Caco-2 (cell line): ENCODE measurements at regions of chrX and their contacts with region 1.

Region 1: DNA sequence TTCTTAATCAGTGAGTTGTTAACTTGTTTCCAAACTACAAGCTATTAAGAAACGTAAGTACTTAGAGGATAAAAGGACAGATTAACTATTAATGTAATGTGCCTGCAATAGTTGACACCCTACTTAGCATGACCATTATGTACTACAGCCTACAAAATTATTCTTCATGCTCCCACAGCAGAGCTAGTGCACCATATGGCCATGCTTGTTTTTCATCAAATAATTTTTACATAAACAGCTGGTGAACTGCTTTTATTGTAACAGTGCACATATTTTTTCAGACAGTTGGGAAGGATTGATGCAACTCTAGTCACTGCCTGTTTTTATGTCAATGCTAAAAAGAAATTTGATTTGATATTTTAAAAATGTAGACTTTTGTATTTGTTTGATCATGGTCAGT is 10.2 kb upstream of the MAGEB10 start:
- DNase-seq: no peak
- H3K4me3 ChIP-seq: no peak overlapping the region
- H3K4me3 Mint-ChIP-seq: no peak overlapping the region
- H3K27ac Mint-ChIP-seq: no peak overlapping the region
- H3K4me1 ChIP-seq: no peaks in the 10 kb centered on the region
- H3K4me1 Mint-ChIP-seq: no peaks in the 10 kb centered on the region
- H3K27me3 ChIP-seq: no peaks in the 10 kb centered on the region
- H3K27me3 Mint-ChIP-seq: no peaks in the 10 kb centered on the region
- CTCF ChIP-seq: no peak

Region 2: DNA sequence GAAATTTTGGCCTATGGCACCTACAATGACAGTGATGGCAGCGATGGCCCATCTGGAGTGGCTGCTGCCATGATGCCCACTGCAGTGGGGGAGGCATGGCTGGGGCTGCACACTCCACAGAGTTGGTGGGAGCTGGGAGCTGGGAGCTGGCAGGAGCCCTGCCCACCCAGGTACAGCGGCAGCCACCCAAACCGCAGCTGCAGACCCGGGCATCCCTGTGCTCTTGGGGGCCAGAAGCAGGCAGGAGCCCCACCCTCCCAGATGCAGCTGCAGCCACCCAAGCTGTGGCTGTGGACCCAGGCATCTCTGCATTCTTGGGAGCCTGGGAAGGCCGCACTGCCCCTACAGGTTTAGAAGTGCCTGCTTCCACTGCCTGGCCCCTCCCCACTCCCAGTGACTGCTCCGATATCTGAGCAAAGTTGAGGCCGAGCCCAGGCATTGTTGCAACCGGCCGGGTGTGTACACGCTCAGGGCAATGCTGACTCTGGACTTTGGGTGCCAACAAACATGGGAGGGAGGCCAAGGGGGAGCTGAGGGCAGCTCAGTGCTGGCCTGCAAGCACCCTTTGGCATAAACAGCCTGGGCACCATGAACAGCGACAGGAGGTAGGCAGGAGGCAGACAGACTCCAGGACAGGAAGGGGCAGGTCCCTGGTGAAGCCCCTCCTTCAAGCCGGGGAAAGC is 417.3 kb before region 1 on chrX:
- CTCF ChIA-PET with region 1: no interaction called
- POLR2A ChIA-PET with region 1: no interaction called
- intact Hi-C with region 1: loop called (anchors 5 kb)
- DNase-seq: peak in 1 of 2 experiments; percentile 5
- H3K4me3 ChIP-seq: no peak overlapping the region
- H3K4me3 Mint-ChIP-seq: no peak overlapping the region
- H3K27ac Mint-ChIP-seq: no peak overlapping the region
- H3K4me1 ChIP-seq: no peaks in the 10 kb centered on the region
- H3K4me1 Mint-ChIP-seq: no peaks in the 10 kb centered on the region
- H3K27me3 ChIP-seq: no peaks in the 10 kb centered on the region
- H3K27me3 Mint-ChIP-seq: no peaks in the 10 kb centered on the region
- CTCF ChIP-seq: no peak

Region 3: GRCh38 chrX:27660878-27661277 is 136.7 kb before region 1 on chrX:
- CTCF ChIA-PET with region 1: no interaction called
- POLR2A ChIA-PET with region 1: no interaction called
- intact Hi-C with region 1: no loop called
- DNase-seq: no peak
- H3K4me3 ChIP-seq: no peak overlapping the region
- H3K4me3 Mint-ChIP-seq: no peak overlapping the region
- H3K27ac Mint-ChIP-seq: no peak overlapping the region
- H3K4me1 ChIP-seq: no peaks in the 10 kb centered on the region
- H3K4me1 Mint-ChIP-seq: no peaks in the 10 kb centered on the region
- H3K27me3 ChIP-seq: no peaks in the 10 kb centered on the region
- H3K27me3 Mint-ChIP-seq: peaks cover 2% of the 10 kb centered on the region
- CTCF ChIP-seq: no peak